Endothelial cell of umbilical vein (primary cell): ENCODE measurements at regions of chr10 and their contacts with region 1.

Region 1: DNA sequence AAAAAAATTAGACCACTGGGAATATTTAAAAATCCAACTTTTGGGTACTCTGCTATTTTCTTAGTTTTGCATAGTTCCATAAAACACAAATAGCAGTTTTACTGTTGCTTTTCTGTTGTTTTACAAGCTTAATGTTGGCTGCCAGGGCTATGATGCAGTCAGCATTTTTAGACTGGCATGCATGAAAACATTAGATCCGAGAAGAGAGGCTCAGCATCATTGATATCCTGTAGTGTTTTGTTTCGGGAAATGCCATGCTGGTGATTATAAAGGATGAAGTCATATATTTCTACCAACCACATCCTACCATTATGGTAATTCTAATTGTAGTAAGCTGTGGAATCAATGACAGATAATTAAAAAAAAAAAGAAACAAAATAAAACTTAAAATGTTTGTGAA is 104.6 kb downstream of the MBL2 start:
- DNase-seq: peak; percentile 86
- H3K4me3 ChIP-seq: no peak overlapping the region
- H3K27ac ChIP-seq: peak overlapping the region; percentile 81
- H3K4me1 ChIP-seq: peaks cover 13% of the 10 kb centered on the region
- H3K27me3 ChIP-seq: no peaks in the 10 kb centered on the region
- CTCF ChIP-seq: no peak
- POLR2A ChIP-seq: no peak

Region 2: DNA sequence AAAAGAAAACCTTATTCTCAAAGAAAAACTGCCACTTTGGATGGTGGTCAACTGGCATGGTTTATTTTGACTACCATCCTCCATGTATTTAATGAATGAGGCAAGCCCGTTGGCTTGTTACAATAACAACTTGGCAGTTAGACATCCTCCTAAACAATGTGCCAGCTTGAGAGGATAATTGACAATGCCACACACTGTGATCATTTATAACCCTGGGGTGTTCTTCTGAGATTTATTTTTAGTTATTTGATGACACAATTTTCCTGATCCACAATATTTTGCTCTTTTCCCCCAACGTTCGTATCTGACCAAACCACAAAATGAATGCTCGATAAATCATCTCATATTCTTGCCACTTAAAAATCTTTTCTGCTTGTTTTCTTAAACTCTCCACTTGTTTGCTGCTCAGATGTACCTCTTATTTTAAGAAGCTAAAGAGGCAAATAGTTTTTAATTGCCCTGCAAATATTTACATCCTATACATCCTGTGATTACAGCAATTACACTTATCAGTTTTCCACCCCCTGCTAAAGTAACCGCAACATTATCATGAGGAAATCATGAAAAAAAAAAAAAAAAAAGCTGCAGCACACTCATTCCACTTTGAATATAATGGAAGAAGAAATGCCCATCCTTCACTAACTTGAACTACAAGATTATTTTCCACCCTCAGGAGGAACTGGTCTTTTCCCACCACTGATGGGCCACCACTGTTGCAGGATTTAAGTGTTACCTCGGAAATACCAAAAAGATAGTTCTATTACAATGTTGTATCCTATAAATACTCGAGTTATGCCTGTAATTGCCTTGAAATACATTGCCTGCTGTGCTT is 15.4 kb before region 1 on chr10:
- CTCF ChIA-PET with region 1: interaction called, 6 read pairs
- POLR2A ChIA-PET with region 1: no interaction called
- dilution Hi-C with region 1: no loop called
- intact Hi-C with region 1: loop called (anchors 2 kb)
- DNase-seq: peak; percentile 55
- H3K4me3 ChIP-seq: no peak overlapping the region
- H3K27ac ChIP-seq: no peak overlapping the region
- H3K4me1 ChIP-seq: peaks cover 12% of the 10 kb centered on the region
- H3K27me3 ChIP-seq: no peaks in the 10 kb centered on the region
- CTCF ChIP-seq: no peak
- POLR2A ChIP-seq: no peak

Region 3: DNA sequence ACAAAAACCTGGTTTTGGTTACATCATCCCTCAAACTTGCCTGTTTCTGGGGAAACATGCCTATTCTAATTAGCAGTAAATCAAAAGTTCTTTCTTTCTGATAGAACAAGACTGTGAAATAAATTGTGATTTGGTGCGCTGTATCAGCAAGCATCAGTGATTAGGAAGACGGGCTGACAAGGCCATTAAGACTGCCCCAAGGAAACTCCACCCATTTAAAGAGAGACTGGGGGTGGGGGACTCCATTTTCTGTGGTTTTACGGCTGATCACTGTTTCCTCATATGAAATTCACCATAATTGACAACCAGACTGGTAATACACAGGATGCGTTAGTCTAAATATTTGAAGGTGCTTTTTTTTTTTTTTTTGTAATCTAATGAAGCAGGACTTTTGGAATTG is 35.9 kb after region 1 on chr10:
- CTCF ChIA-PET with region 1: interaction called, 5 read pairs
- POLR2A ChIA-PET with region 1: no interaction called
- dilution Hi-C with region 1: no loop called
- intact Hi-C with region 1: loop called (anchors 2 kb)
- DNase-seq: peak; percentile 74
- H3K4me3 ChIP-seq: no peak overlapping the region
- H3K27ac ChIP-seq: peak overlapping the region; percentile 52
- H3K4me1 ChIP-seq: peaks cover 14% of the 10 kb centered on the region
- H3K27me3 ChIP-seq: no peaks in the 10 kb centered on the region
- CTCF ChIP-seq: no peak
- POLR2A ChIP-seq: no peak